ENCODE measurements at regions of chr1 and their contacts with region 1.

Region 1: DNA sequence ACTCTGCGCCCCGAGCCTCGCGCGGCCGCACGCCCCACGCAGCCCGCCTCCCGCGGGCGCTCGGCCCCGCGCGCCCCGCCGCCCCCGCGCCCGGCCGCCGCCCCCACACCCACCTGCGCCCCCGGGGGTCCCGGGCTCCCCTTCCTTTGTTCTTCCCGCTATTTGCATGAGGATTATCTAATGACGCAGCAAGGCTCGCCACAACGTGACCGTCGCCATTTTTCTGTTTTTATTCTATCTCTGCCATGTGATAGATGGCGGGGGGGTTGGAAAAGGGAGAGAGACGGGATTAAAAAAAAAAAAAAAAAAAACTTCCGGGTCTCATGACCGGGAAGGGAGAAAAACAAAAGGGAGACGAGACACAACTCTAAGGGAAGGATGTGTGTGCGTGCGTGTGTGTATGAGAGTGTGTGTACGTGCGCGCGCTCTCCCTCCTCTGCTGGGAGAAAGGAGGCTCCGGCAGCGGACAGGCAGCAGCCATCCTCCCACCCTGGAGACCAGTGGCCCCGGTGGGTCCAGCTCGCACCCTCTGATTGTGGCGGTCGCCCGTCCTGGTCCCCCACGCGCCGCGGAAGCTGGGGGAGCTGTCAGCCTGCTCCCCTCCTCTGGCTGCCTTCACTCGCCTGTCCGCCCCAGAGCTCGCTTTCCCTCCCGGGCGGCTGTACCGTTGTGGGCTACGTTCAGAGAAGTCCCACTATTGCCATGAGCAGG is 80.4 kb upstream of the AK4 start:
- DNase-seq: peak; percentile 66 to 86
- ATAC-seq: peak; percentile 30 to 70 (median 62)
- H3K4me3 ChIP-seq: peak overlapping the region; percentile 69 to 99 (median 87)
- H3K27ac ChIP-seq: peak overlapping the region; percentile 97 to 100 (median 99)
- H3K4me1 ChIP-seq: peaks cover 3 to 43% (median 40%) of the 10 kb centered on the region in 9 donors
- H3K27me3 ChIP-seq: no peaks in the 10 kb centered on the region
- CTCF ChIP-seq: no peak

Region 2: GRCh38 chr1:64378826-64379225 is 688.8 kb before region 1 on chr1:
- intact Hi-C with region 1: no loop called
- DNase-seq: no peak
- ATAC-seq: no peak
- H3K4me3 ChIP-seq: no peak overlapping the region
- H3K27ac ChIP-seq: no peak overlapping the region
- H3K4me1 ChIP-seq: no peaks in the 10 kb centered on the region
- H3K27me3 ChIP-seq: no peaks in the 10 kb centered on the region
- CTCF ChIP-seq: peak in 7 of 9 donors; percentile 20 to 51 (median 32)

Region 3: GRCh38 chr1:64864018-64864940 is 203.4 kb before region 1 on chr1:
- intact Hi-C with region 1: loop called in 4 of 10 experiments (anchors 5 to 10 kb)
- DNase-seq: peak; percentile 67 to 71
- ATAC-seq: peak; percentile 85 to 95 (median 88)
- H3K4me3 ChIP-seq: peak overlapping the region in 1 of 10 donors; percentile 4
- H3K27ac ChIP-seq: peak overlapping the region in 8 of 10 donors; percentile 8 to 82 (median 62)
- H3K4me1 ChIP-seq: peaks cover 0 to 32% (median 19%) of the 10 kb centered on the region in 9 donors
- H3K27me3 ChIP-seq: no peaks in the 10 kb centered on the region
- CTCF ChIP-seq: no peak

Region 4: GRCh38 chr1:64966158-64966971 is 101.3 kb before region 1 on chr1 and contains the start of gene JAK1:
- intact Hi-C with region 1: loop called in 4 of 10 experiments (anchors 2 to 10 kb)
- DNase-seq: peak; percentile 91 to 92
- ATAC-seq: peak; percentile 92 to 96 (median 94)
- H3K4me3 ChIP-seq: peak within 1 kb of the TSS; percentile 66 to 99 (median 88)
- H3K27ac ChIP-seq: peak within 1 kb of the TSS; percentile 93 to 100 (median 96)
- H3K4me1 ChIP-seq: peaks cover 7 to 50% (median 32%) of the 10 kb centered on the region in 9 donors
- H3K27me3 ChIP-seq: no peaks in the 10 kb centered on the region
- CTCF ChIP-seq: peak in 3 of 9 donors; percentile 3 to 19 (median 10)
- total RNA-seq, gene JAK1: 73.4 to 122 (median 84.4) TPM

Region 5: DNA sequence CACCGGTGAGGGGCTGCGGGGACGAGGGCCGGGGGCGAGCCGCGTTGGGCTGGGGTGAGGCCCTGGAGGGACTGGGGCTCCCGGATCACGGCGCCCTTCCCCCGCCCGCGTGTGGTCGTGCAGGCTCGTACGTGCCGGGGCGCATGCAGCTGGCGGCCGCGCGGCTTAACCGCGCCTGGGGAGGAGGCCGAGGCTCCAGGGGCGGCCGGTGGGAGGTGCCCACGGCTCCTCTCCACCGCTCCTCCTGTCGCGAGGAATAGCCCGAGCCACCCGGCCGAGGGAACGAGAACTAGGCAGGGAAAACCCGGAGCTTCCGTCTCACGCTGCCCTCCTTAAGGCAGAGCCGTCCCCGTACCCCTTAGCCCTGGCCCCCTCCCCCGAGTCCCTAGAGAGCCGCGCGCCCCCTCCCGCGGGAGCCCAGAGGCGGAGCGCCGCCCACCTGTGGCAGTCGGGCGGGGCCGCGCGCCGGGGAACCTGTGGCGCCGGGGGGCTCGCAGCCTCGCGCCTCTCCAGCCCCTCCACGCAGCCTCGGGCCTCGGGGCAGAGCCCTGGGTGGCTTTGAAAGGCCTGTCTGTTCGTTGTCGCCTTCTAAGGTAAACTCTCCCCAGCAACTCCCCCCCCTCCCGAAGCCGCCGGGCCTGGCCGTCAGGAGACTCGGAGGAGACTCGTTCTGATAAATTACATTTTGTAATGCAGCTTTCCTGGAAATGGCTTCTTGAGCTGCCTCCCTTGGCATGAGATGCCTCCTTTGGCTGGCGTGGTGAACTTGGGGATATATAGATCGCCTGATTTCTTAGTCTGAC is 81.1 kb after region 1 on chr1:
- intact Hi-C with region 1: loop called in 5 of 10 experiments (anchors 5 to 10 kb)
- DNase-seq: peak; percentile 32 to 60
- ATAC-seq: peak; percentile 59 to 88 (median 73)
- H3K4me3 ChIP-seq: peak overlapping the region; percentile 77 to 94 (median 86)
- H3K27ac ChIP-seq: peak overlapping the region; percentile 55 to 95 (median 88)
- H3K4me1 ChIP-seq: peaks cover 0 to 38% (median 18%) of the 10 kb centered on the region in 9 donors
- H3K27me3 ChIP-seq: peaks cover 0 to 25% (median 0%) of the 10 kb centered on the region in 7 donors
- CTCF ChIP-seq: no peak

Region 6: GRCh38 chr1:65195495-65196417 is 128.1 kb after region 1 on chr1:
- intact Hi-C with region 1: loop called in 2 of 10 experiments (anchors 5 kb)
- DNase-seq: peak in 1 of 2 donors; percentile 37
- ATAC-seq: peak; percentile 61 to 87 (median 78)
- H3K4me3 ChIP-seq: no peak overlapping the region
- H3K27ac ChIP-seq: peak overlapping the region in 9 of 10 donors; percentile 4 to 90 (median 79)
- H3K4me1 ChIP-seq: peaks cover 4 to 37% (median 26%) of the 10 kb centered on the region in 9 donors
- H3K27me3 ChIP-seq: no peaks in the 10 kb centered on the region
- CTCF ChIP-seq: no peak

Region 7: DNA sequence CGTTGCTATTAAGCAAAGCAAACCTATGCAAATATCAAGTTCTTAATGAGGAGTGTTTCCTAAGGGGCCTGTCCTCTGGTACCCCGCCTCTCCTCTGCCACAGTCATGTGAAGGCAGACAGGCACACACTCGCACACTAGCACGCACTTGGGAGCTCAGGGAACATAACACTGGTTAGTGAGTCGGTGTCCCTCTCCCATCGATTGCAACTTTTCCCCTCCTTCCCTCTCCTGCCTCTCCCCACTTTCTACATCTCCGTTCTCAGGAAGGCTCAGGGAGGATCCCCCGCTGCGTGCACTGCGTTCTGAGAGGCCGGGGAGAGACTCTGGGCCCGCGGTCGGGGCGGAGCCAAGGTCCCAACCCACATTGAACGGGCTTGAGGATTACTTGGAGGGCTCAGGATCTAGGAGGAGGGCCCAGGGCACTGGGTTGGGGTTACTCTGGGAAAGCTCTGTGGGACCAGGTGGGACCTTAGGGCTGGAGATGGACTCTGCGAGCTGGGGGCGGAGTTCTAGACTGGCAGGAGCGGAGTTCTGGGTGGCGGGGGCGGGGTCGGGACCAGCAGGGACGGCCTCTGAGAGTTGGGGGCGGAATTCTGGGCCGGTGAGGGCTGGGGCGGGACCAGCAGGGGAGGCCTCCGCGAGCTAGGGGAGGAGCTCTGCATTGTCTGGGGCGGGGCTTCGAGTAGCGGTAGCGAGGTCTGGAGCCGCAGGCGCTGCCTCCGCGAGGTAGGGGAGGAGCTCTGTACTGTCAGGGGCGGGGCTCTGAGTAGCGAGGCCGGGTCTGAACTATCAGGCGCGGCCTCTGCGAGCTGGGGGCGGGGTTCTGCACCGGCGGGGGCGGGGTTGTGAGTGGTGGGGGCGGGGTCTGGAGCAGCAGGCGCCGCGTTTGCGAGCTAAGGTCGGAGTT is 352.3 kb after region 1 on chr1:
- intact Hi-C with region 1: loop called in 6 of 10 experiments (anchors 5 to 10 kb)
- DNase-seq: peak; percentile 98 to 99
- ATAC-seq: peak; percentile 96 to 99 (median 98)
- H3K4me3 ChIP-seq: peak overlapping the region; percentile 50 to 96 (median 82)
- H3K27ac ChIP-seq: peak overlapping the region; percentile 89 to 99 (median 98)
- H3K4me1 ChIP-seq: peaks cover 0 to 40% (median 34%) of the 10 kb centered on the region in 9 donors
- H3K27me3 ChIP-seq: no peaks in the 10 kb centered on the region
- CTCF ChIP-seq: no peak